ENCODE measurements at regions of chr7 and their contacts with region 1.

Region 1: GRCh38 chr7:26398756-26399501 is 107.3 kb downstream of the SNX10 start:
- DNase-seq: peak; percentile 49 to 70 (median 54)
- ATAC-seq: peak; percentile 77
- H3K4me3 ChIP-seq: peak overlapping the region; percentile 54
- H3K27ac ChIP-seq: peak overlapping the region; percentile 77
- H3K4me1 ChIP-seq: peaks cover 17 to 18% of the 10 kb centered on the region in 2 experiments
- H3K27me3 ChIP-seq: no peaks in the 10 kb centered on the region
- CTCF ChIP-seq: peak; percentile 46 to 58 (median 49); a peak in 5 of 6 replicates
- EP300 ChIP-seq: no peak
- POLR2A ChIP-seq: peak; percentile 65
- RAD21 ChIP-seq: peak; percentile 38 to 65

Region 2: DNA sequence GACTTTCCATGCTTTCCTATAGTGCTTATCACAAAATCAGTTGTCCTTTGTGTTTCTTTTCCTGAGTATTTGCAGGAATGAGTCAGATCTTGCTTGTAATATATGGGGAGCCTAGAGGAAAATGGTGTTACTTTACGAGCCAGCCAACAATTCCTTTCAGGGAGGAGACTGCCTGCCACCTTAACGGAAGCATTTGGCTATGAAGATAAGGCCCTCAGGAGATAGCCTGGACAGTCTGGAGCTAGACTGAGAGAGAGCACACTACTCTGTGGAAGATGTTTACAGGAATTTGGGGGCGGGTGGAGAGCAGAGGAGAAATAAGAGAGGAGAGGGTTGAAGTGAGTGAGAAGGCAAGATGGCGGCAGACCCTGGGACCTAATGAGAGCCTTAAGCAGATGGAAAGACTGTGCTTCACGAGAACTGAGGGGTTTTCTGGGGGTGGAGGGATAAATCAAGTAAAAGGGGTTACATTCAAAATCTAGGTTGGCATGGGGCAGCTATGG is 19.0 kb after region 1 on chr7:
- CTCF ChIA-PET with region 1: no interaction called
- POLR2A ChIA-PET with region 1: interaction called, 5 read pairs
- in situ Hi-C with region 1: no loop called
- intact Hi-C with region 1: loop called (anchors 1 kb)
- DNase-seq: peak; percentile 53 to 90 (median 72)
- ATAC-seq: peak; percentile 96
- H3K4me3 ChIP-seq: no peak overlapping the region; the same call in 1 of the 2 replicates
- H3K27ac ChIP-seq: peak overlapping the region; percentile 80
- H3K4me1 ChIP-seq: peaks cover 7 to 46% of the 10 kb centered on the region in 2 experiments
- H3K27me3 ChIP-seq: no peaks in the 10 kb centered on the region
- CTCF ChIP-seq: no peak
- EP300 ChIP-seq: peak; percentile 92
- POLR2A ChIP-seq: peak; percentile 73
- RAD21 ChIP-seq: 0 out of 4 replicates have a peak, but pooled peaks of 1 of the 2 experiments have one; percentile 13

Region 3: GRCh38 chr7:26449175-26450165 is 50.5 kb after region 1 on chr7:
- CTCF ChIA-PET with region 1: no interaction called
- POLR2A ChIA-PET with region 1: interaction called, 3 read pairs
- in situ Hi-C with region 1: no loop called
- intact Hi-C with region 1: loop called (anchors 5 kb)
- DNase-seq: no peak
- ATAC-seq: no peak; the same call in 2 of the 3 replicates
- H3K4me3 ChIP-seq: no peak overlapping the region
- H3K27ac ChIP-seq: no peak overlapping the region
- H3K4me1 ChIP-seq: no peaks in the 10 kb centered on the region
- H3K27me3 ChIP-seq: peaks cover 16 to 24% of the 10 kb centered on the region in 2 experiments
- CTCF ChIP-seq: no peak
- EP300 ChIP-seq: no peak
- POLR2A ChIP-seq: no peak
- RAD21 ChIP-seq: no peak

Region 4: DNA sequence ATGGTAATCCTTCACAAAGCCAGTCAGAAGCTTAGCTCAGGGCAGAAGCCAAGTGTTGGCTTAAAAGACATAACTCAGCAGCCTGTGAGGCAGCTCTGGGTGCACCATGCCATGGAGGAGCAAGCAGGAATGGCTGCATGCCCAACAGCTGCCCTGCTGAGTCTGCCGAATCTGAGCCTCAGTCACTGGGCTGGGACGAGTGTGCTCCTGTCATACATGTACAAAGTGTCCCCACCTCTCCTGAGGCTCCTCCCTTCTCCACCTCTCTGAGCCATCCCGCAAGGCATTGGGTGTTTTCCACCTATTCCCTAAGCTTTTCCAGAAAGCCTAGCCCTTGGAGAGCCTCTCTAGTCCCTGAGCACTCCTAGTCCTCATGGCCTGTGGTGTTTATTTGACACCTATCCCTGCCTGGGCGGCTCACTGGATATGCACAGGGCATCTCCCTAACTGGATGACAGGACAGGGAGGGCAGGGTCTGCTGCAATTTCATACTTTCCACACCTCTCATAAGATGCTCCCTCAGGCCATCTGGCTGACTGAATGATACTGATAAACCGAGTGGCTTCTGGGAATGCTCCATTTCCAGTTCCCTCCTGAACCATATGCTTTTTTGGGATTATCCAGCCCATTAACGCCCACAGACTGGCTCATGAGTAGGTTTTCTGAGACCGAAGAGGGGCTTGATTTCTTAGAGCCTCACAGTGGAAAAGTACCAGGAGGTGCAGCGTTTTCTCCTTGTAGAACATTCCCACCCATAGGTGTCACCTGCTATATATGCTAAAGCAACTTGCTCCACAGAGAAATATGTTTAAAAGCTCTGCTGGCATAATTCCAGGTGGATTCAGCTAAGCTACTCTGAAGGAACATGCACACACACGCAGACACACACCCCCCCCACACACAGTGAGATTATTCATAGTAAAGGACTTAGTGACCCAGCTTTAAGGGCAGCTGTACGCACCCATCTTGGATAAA is 92.0 kb after region 1 on chr7:
- CTCF ChIA-PET with region 1: no interaction called
- POLR2A ChIA-PET with region 1: no interaction called
- in situ Hi-C with region 1: loop called (anchors 25 kb)
- intact Hi-C with region 1: no loop called
- DNase-seq: no peak
- ATAC-seq: no peak
- H3K4me3 ChIP-seq: no peak overlapping the region
- H3K27ac ChIP-seq: no peak overlapping the region
- H3K4me1 ChIP-seq: no peaks in the 10 kb centered on the region
- H3K27me3 ChIP-seq: peaks cover 34 to 52% of the 10 kb centered on the region in 2 experiments
- CTCF ChIP-seq: no peak
- EP300 ChIP-seq: no peak
- POLR2A ChIP-seq: no peak
- RAD21 ChIP-seq: no peak

Measured in K562 (cell line).